ENCODE measurements at regions of chr5 and their contacts with region 1.

Region 1: GRCh38 chr5:98905857-98906690 is 22.7 kb downstream of the CHD1 start:
- DNase-seq: no peak
- H3K4me3 Mint-ChIP-seq: no peak overlapping the region
- H3K27ac Mint-ChIP-seq: peak overlapping the region; percentile 43
- H3K4me1 Mint-ChIP-seq: peaks cover 43% of the 10 kb centered on the region
- H3K27me3 Mint-ChIP-seq: no peaks in the 10 kb centered on the region

Region 2: DNA sequence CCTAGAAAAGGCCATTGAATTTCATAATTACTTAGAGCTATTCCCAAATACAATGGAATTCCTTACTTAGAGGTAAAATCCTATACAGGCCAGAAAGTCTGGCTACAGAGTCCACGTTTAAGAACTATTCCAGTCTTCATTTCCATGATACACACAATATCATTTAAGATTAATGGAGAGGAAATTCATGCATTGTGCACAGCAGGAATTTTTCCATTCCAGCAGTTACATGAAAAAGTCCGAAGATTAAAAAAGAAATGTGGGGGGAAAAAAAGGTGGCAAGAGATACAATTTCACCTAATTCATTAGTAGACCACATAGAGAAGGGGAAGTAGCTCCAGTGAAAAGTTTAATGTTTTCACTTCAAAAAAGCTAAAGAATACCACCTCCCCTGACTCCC is 40.4 kb before region 1 on chr5:
- intact Hi-C with region 1: loop called (anchors 5 kb)
- DNase-seq: no peak
- H3K4me3 Mint-ChIP-seq: no peak overlapping the region
- H3K27ac Mint-ChIP-seq: no peak overlapping the region
- H3K4me1 Mint-ChIP-seq: peaks cover 9% of the 10 kb centered on the region
- H3K27me3 Mint-ChIP-seq: no peaks in the 10 kb centered on the region

Region 3: GRCh38 chr5:98928873-98929696 is 23.0 kb after region 1 on chr5 and contains the start of gene CHD1:
- intact Hi-C with region 1: loop called (anchors 1 kb)
- DNase-seq: peak; percentile 92
- H3K4me3 Mint-ChIP-seq: peak within 1 kb of the TSS; percentile 98
- H3K27ac Mint-ChIP-seq: peak within 1 kb of the TSS; percentile 99
- H3K4me1 Mint-ChIP-seq: peaks cover 41% of the 10 kb centered on the region
- H3K27me3 Mint-ChIP-seq: no peaks in the 10 kb centered on the region
- total RNA-seq, gene CHD1: 67.6 and 72.1 TPM in 2 replicates

Region 4: DNA sequence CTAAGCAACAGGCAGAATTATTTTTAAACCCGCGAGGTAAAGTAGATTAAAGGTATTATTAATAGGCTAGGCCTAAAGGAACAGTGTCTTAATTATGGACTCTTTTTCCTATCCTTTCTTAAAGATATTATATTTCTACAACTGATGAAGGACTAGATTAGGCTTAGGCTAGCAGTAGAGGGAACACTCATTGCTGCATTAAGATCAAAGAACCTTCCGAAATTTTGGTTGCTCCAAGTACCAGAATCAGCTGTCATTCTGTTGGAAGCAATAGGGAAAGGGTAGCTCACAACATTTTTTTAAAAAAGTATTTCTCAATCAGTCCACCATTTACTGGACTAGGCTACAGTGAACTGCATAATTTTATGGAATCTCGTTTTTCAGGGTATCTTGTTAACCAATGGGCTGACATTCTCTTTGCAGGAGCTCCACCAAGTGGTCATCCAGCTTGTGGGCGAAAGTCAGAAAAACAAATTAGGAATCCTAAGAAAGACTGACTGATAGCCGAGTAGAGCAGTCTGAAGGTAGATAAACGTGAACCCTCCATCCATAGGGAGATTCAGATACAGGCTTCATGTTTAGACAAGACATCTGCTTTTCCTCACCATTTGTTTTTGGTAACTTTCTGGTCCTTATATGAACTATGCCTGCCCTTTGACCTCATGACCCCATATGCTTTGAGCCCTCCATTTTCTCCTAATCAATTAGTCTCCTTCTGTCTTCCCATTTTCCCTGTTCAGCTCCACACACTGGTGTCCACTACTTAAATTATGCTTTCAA is 126.3 kb after region 1 on chr5:
- intact Hi-C with region 1: loop called (anchors 1 kb)
- DNase-seq: no peak
- H3K4me3 Mint-ChIP-seq: peak overlapping the region; percentile 77
- H3K27ac Mint-ChIP-seq: peak overlapping the region; percentile 82
- H3K4me1 Mint-ChIP-seq: peaks cover 69% of the 10 kb centered on the region
- H3K27me3 Mint-ChIP-seq: no peaks in the 10 kb centered on the region

Region 5: GRCh38 chr5:99060306-99061261 is 154.5 kb after region 1 on chr5:
- intact Hi-C with region 1: loop called (anchors 1 kb)
- DNase-seq: peak; percentile 69
- H3K4me3 Mint-ChIP-seq: no peak overlapping the region
- H3K27ac Mint-ChIP-seq: no peak overlapping the region
- H3K4me1 Mint-ChIP-seq: peaks cover 9% of the 10 kb centered on the region
- H3K27me3 Mint-ChIP-seq: peaks cover 7% of the 10 kb centered on the region

Measured in activated T-helper 2 cell treated with anti-CD3 and anti-CD28 coated beads, Interferon-gamma antibody, Interleukin-2, Interleukin-4, amounts not matched to agents 10 μg/mL and 5 μg/mL and 100 μg/mL, durations not matched to agents 14 hours and 24 hours and 36 hours (primary cell).